Lower leg skin (tissue), 4 donors: ENCODE measurements at regions of chr10 and their contacts with region 1.

Region 1: GRCh38 chr10:15227611-15228368 is 59.3 kb upstream of the NMT2 start:
- DNase-seq: peak in 1 of 2 donors; percentile 13
- H3K4me3 ChIP-seq: no peak overlapping the region
- CTCF ChIP-seq: no peak
- POLR2A ChIP-seq: no peak

Region 2: GRCh38 chr10:15280462-15280861 is 52.7 kb after region 1 on chr10:
- intact Hi-C with region 1: loop called (anchors 2 kb)
- DNase-seq: peak in 1 of 2 donors; percentile 23
- H3K4me3 ChIP-seq: no peak overlapping the region
- CTCF ChIP-seq: no peak
- POLR2A ChIP-seq: no peak

Region 3: GRCh38 chr10:15374156-15374555 is 146.4 kb after region 1 on chr10:
- intact Hi-C with region 1: no loop called
- DNase-seq: peak in 1 of 2 donors; percentile 50
- H3K4me3 ChIP-seq: no peak overlapping the region
- CTCF ChIP-seq: no peak
- POLR2A ChIP-seq: no peak